Psoas muscle (tissue), 8 donors: ENCODE measurements at regions of chr16 and their contacts with region 1.

Region 1: GRCh38 chr16:75110637-75111513 is 5.7 kb downstream of the LDHD start:
- DNase-seq: peak; percentile 92 to 95
- ATAC-seq: peak; percentile 63 to 67 (median 65)
- H3K4me3 ChIP-seq: peak overlapping the region; percentile 42
- H3K27ac ChIP-seq: peak overlapping the region; percentile 95
- H3K4me1 ChIP-seq: peaks cover 79% of the 10 kb centered on the region
- H3K27me3 ChIP-seq: no peaks in the 10 kb centered on the region
- CTCF ChIP-seq: peak; percentile 90

Region 2: DNA sequence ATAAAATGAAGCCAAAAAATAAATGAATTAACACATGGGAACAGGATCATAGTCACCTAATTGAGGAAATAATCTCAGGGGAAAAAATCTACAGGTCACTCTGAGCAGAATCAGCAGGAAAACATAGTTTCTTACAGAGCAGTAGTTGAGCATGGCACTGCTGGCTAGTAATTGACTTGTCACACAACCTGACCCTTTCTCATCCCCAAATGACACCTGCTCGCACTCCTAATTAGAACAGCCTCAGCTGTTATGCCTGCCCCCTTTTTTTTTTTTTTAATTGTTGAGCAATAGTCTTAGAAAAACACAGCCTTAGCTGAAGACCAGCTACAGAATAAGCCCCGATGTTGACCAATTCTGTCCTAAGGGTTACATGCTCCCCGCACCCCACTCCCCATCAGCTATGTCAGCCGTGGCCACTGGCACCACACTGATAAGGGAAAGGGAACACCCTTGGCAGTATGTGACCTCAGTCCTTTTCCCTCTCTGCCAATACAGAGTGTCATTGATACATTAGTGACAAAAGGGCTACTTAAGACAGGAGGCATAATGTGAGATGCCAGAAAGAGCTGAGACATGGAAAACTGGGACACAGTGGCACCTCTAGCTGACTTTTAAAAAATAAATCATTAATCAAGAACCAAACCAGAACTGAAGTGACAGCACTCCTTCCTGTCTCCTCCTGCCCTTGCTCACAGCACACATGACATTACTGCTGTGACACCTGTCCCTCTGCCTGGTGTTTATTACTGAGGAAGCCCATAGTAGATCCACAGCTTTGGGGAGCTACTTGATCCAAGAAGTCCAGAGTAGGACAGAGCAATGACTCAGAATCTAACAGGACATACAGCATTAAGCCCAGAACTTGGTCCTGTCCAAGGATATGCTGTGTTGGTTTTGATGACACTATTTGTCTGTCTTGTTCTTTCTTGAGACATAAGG is 167.6 kb before region 1 on chr16:
- intact Hi-C with region 1: loop called in 1 of 2 experiments (anchors 2 kb)
- DNase-seq: no peak
- ATAC-seq: peak; percentile 82 to 93 (median 90)
- H3K4me3 ChIP-seq: peak overlapping the region; percentile 22
- H3K27ac ChIP-seq: peak overlapping the region; percentile 81
- H3K4me1 ChIP-seq: peaks cover 11% of the 10 kb centered on the region
- H3K27me3 ChIP-seq: no peaks in the 10 kb centered on the region
- CTCF ChIP-seq: no peak

Region 3: DNA sequence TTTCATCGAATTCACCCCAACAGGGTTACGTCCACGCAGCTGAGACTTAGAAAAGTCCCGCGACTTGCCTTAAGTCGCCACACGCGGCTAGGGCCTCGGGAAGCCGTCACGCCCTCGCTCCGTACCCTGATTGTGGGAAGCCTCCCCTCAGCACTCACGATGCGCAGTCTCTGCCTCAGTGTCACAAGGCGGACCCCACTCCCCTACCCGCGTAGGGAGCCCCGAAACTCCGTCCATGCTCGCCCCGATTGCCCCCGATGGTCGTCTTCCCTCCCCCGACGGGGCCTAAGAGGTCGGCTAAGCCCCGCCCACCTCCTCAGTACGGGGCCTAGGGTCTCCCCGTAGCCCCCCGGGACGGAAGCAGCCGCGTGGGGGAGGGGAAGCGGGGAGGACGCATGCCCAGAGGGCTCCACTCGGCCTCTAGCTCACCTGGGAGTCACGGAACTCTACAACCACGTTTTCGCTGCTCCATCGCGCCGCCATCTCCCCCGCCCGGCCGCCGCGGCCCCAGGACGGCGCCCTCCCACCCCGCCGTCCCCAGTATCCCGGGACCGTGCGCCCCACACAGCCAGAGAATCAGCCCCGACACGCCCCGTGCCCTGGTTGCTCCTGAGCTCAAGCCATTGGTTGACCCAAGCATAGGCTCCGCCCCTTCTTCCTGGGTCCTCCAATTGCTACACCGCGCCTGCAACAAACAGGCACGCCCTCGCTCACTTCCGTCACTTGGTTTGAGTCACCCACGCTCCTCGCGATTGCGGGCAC is 126.2 kb before region 1 on chr16 and contains the start of gene WDR59:
- intact Hi-C with region 1: loop called in 1 of 2 experiments (anchors 2 kb)
- DNase-seq: peak; percentile 99
- ATAC-seq: peak; percentile 99
- H3K4me3 ChIP-seq: peak within 1 kb of the TSS; percentile 100
- H3K27ac ChIP-seq: peak within 1 kb of the TSS; percentile 93
- H3K4me1 ChIP-seq: peaks cover 17% of the 10 kb centered on the region
- H3K27me3 ChIP-seq: no peaks in the 10 kb centered on the region
- CTCF ChIP-seq: no peak
- total RNA-seq, gene WDR59: 30.6 to 48.2 (median 31.7) TPM

Region 4: GRCh38 chr16:74998481-74999218 is 112.2 kb before region 1 on chr16 and contains the start of gene ZNRF1:
- intact Hi-C with region 1: loop called (anchors 1 kb)
- DNase-seq: peak; percentile 87 to 93
- ATAC-seq: peak; percentile 91 to 95 (median 92)
- H3K4me3 ChIP-seq: peak within 1 kb of the TSS; percentile 97
- H3K27ac ChIP-seq: peak within 1 kb of the TSS; percentile 84
- H3K4me1 ChIP-seq: peaks cover 36% of the 10 kb centered on the region
- H3K27me3 ChIP-seq: no peaks in the 10 kb centered on the region
- CTCF ChIP-seq: peak; percentile 82
- total RNA-seq, gene ZNRF1: 21.1 to 57.0 (median 36.1) TPM

Region 5: GRCh38 chr16:75029557-75030253 is 81.2 kb before region 1 on chr16:
- intact Hi-C with region 1: no loop called
- DNase-seq: no peak
- ATAC-seq: no peak
- H3K4me3 ChIP-seq: no peak overlapping the region
- H3K27ac ChIP-seq: no peak overlapping the region
- H3K4me1 ChIP-seq: peaks cover 26% of the 10 kb centered on the region
- H3K27me3 ChIP-seq: no peaks in the 10 kb centered on the region
- CTCF ChIP-seq: no peak

Region 6: DNA sequence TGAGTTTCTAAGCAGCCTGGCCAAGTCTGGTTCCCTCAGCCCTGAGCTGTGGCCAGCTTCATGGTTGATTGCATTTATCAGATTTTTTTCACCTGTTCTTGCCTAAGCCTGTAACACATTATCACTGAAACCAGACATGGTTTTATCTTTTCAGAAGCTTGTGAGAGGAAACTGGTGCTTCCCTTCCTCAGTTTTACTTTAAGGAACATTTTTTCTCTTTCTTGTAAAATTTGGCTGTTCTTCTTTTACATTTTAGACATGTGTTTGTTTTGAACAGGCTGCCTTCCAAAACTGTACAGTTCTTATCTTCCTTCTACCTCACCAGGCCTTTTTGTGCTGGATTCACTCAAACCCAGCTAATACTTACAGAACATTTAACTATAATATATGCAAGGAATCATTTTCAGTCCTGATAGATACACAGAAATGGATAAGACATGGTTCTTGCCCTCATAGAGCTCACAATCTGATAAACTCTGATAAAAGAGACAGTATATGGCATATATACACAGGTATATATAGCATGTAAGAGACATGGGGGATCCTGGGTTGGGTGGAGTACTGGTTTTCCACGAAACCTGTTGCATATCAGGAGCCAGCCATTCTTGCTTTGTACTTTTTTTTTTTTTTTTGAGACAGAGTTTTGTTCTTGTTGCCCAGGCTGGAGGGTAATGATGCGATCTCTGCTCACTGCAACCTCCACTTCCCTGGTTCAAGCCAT is 67.5 kb before region 1 on chr16:
- intact Hi-C with region 1: loop called in 1 of 2 experiments (anchors 1 kb)
- DNase-seq: no peak
- ATAC-seq: peak in 1 of 4 donors; percentile 4
- H3K4me3 ChIP-seq: no peak overlapping the region
- H3K27ac ChIP-seq: peak overlapping the region; percentile 74
- H3K4me1 ChIP-seq: peaks cover 58% of the 10 kb centered on the region
- H3K27me3 ChIP-seq: no peaks in the 10 kb centered on the region
- CTCF ChIP-seq: no peak

Region 7: GRCh38 chr16:75064403-75065148 is 46.3 kb before region 1 on chr16:
- intact Hi-C with region 1: loop called in 1 of 2 experiments (anchors 5 kb)
- DNase-seq: no peak
- ATAC-seq: peak in 1 of 4 donors; percentile 2
- H3K4me3 ChIP-seq: no peak overlapping the region
- H3K27ac ChIP-seq: no peak overlapping the region
- H3K4me1 ChIP-seq: peaks cover 47% of the 10 kb centered on the region
- H3K27me3 ChIP-seq: no peaks in the 10 kb centered on the region
- CTCF ChIP-seq: no peak

Region 8: GRCh38 chr16:75206749-75207451 is 96.0 kb after region 1 on chr16 and contains the start of gene CTRB2:
- intact Hi-C with region 1: no loop called
- DNase-seq: peak in 1 of 2 donors; percentile 10
- ATAC-seq: peak in 2 of 4 donors; percentile 16 to 26
- H3K4me3 ChIP-seq: no peak within 1 kb of the TSS
- H3K27ac ChIP-seq: no peak within 1 kb of the TSS
- H3K4me1 ChIP-seq: no peaks in the 10 kb centered on the region
- H3K27me3 ChIP-seq: no peaks in the 10 kb centered on the region
- CTCF ChIP-seq: no peak
- total RNA-seq, gene CTRB2: 2.4 TPM in 1 of 4 donors, not detected in the others